Left ventricle myocardium superior (tissue), 1 donor: ENCODE measurements at regions of chr12 and their contacts with region 1.

Region 1: DNA sequence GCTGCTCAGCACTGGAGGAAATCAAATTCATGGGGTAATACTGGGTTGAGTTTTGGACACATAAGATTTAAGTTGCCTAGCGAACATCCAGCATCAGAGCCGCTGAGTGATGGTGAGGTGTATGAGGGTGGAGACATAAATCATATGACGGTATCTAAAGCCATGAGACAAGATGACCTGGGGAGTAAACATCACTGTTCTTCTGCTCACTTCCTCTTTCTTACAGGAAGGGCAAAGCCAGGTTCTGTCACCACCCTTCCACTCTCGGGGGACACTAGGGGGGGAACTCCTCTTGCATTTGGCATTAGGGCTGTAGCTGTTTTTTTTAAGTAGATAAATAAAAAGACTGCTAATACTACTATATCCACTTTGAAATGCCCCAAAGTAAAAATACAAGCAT is 24.0 kb downstream of the PRDM4 start:
- DNase-seq: no peak
- ATAC-seq: no peak

Region 2: GRCh38 chr12:107685360-107686248 is 51.3 kb before region 1 on chr12 and contains the start of gene PWP1:
- intact Hi-C with region 1: loop called (anchors 5 kb)
- DNase-seq: peak; percentile 98
- ATAC-seq: peak; percentile 98
- total RNA-seq, gene PWP1: 12.0 TPM

Region 3: DNA sequence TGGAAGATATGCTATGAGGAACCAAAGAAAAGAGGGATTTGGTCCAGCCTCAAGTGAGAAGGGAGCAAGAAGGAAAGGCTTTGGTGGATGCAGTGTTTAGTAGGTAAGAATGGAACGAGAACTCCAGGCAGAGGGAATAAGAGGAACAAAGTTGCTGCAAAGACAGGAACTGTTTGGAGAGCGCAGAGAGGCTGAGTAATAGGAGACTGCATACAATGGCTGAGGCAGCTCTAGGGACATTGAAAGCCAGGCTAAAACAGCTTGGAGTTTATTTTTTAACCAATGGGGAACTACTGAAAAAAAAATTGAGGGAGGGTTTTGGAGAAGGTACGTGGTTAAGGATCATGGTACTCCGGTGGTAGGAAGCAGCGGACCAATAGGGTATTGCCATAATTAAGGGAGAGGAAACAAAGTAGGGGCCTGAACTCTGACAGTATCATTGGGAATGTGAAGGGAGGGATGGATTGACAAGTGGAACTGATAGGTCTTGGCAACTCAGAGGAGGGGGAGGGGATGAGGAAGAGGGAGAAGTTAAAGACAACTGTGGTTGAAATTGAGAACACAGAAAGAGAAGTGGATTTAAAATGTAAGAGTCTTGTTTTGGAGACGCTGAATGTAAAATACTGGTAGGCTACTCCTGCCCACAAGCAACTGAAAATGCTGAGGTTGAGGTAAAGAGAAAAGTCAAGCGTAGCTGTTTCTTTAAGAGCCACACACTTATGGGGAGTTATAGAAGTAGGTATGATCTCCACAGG is 42.3 kb after region 1 on chr12:
- intact Hi-C with region 1: no loop called
- DNase-seq: no peak
- ATAC-seq: peak; percentile 64